Prostate gland (tissue), 2 donors: ENCODE measurements at regions of chr12 and their contacts with region 1.

Region 1: GRCh38 chr12:76348079-76348901 is at the start of gene BBS10:
- DNase-seq: peak; percentile 89
- H3K4me3 ChIP-seq: peak within 1 kb of the TSS; percentile 59 to 69
- H3K27ac ChIP-seq: peak within 1 kb of the TSS; percentile 80 to 83
- H3K4me1 ChIP-seq: peaks cover 5% of the 10 kb centered on the region
- H3K27me3 ChIP-seq: no peaks in the 10 kb centered on the region
- CTCF ChIP-seq: peak in 3 of 4 experiments; percentile 34 to 51 (median 38)
- POLR2A ChIP-seq: no peak
- total RNA-seq, gene BBS10: 11.6 to 11.9 TPM

Region 2: DNA sequence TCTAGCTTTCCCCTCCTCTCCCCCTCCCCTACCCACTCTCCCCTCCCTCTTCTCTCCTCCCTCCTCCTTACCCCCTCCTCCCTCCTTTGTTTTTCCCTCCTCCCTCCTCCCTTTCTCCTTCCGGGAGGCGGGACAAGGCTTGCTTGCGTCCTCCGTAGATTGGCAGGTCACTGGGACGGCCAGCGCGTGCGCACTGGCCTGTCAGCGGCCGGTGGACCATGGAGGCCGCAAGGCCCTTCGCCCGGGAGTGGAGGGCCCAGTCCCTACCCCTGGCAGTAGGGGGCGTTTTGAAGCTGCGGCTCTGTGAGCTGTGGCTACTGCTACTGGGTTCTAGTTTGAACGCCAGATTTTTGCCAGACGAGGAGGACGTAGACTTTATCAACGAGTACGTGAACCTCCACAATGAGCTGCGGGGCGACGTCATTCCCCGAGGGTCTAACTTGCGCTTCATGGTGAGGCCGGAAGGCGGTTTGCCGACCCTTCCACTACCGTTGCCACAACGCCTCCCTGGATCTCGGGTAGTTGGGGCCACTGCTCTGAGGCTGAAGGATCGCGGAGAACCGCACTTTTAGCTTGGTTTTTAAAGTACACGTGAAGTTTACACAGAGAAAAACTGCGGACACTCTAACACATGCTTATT is 957.3 kb before region 1 on chr12 and contains the start of gene GLIPR1L2:
- intact Hi-C with region 1: loop called (anchors 10 kb)
- DNase-seq: peak; percentile 94
- H3K4me3 ChIP-seq: peak within 1 kb of the TSS; percentile 46 to 52
- H3K27ac ChIP-seq: peak within 1 kb of the TSS; percentile 86 to 91
- H3K4me1 ChIP-seq: no peaks in the 10 kb centered on the region
- H3K27me3 ChIP-seq: no peaks in the 10 kb centered on the region
- CTCF ChIP-seq: peak; percentile 21 to 91 (median 82)
- POLR2A ChIP-seq: peak; percentile 64
- total RNA-seq, gene GLIPR1L2: 1.4 to 1.8 TPM

Region 3: DNA sequence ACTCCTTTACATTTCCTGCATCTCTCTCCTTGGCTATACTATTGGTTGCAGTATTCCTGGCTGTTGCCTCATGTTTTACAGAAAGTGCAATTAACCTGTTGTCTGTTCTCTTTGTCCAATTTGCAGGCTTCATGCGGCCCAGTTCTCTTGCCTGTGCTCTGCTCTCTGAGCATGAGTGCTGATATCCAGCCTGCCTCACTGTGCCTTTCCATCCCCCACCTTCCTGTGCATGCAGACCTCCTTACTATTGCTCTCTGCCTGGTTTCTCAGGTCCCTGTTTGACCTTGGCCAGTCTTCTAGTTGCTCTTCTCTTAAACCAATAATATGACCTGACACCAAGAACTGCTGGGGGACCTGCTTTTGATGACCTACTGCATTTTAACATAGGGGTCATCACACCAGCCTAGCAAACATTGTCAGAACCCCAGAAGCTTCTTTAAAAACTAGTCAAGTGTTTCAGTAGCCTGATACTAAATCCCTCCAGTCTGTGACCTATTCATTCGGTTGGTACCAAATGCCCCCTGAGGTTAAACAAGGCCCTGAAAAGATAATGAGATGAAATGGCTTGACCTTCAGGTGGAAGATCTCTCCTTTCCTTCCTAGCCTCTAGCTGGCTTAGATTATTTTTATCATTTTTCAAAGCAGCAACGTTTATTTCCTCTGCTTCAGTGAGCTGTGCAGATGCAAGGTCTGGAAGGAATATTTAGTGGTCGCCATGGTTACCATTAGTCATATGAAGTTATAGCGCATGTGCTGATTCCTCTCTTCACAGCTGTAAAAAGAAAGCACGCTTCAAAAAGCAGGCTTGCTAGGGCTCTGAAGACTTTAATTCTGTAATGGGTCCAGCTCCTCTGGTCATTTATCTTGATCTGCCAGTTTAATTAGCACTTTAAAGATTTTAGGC is 533.2 kb before region 1 on chr12:
- intact Hi-C with region 1: loop called (anchors 10 kb)
- DNase-seq: no peak
- H3K4me3 ChIP-seq: no peak overlapping the region
- H3K27ac ChIP-seq: no peak overlapping the region
- H3K4me1 ChIP-seq: no peaks in the 10 kb centered on the region
- H3K27me3 ChIP-seq: no peaks in the 10 kb centered on the region
- CTCF ChIP-seq: no peak
- POLR2A ChIP-seq: no peak

Region 4: GRCh38 chr12:75996861-75997447 is 351.3 kb before region 1 on chr12:
- intact Hi-C with region 1: no loop called
- DNase-seq: no peak
- H3K4me3 ChIP-seq: no peak overlapping the region
- H3K27ac ChIP-seq: no peak overlapping the region
- H3K4me1 ChIP-seq: no peaks in the 10 kb centered on the region
- H3K27me3 ChIP-seq: no peaks in the 10 kb centered on the region
- CTCF ChIP-seq: no peak
- POLR2A ChIP-seq: no peak

Region 5: GRCh38 chr12:76083904-76084862 is 264.1 kb before region 1 on chr12 and contains the start of gene NAP1L1:
- intact Hi-C with region 1: loop called (anchors 2 kb)
- DNase-seq: peak; percentile 97
- H3K4me3 ChIP-seq: peak within 1 kb of the TSS; percentile 76 to 94
- H3K27ac ChIP-seq: peak within 1 kb of the TSS; percentile 96 to 99
- H3K4me1 ChIP-seq: no peaks in the 10 kb centered on the region
- H3K27me3 ChIP-seq: no peaks in the 10 kb centered on the region
- CTCF ChIP-seq: peak in 1 of 4 experiments; percentile 11
- POLR2A ChIP-seq: peak; percentile 93
- total RNA-seq, gene NAP1L1: 223 to 325 TPM

Region 6: DNA sequence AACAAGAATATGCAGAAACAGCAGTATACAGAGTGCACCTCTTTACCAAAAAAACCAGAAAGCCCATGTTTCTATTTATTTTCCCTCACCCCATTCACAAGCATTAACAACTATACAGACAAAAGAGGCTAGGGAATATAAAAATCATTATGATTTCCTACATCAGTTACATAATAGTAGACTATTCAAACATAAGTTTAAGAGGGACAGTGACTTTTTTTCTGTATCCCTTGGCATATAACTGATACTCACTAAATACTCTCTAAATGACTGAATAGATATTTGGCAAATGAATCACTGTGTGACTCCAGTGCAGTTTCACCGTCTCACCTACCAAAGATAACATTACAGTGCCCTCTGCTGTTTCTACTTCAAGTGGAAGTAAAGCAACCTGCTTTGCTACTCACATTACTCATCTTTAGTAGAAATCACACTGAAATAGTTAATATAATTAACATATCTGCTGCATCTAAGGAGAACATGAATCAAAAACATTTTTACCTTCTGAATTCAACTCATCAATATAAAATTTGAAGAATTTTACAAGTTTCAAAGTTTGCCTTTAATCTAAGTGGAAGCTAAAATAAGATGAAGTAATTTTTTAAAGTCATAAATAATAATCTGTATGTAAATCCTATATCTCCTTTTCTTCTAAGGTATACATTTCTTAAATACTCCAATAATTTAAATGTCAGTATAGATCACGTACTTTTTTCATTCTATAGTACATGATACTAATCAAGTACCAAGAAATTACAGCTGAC is 107.5 kb after region 1 on chr12:
- intact Hi-C with region 1: loop called (anchors 10 kb)
- DNase-seq: peak; percentile 14
- H3K4me3 ChIP-seq: no peak overlapping the region
- H3K27ac ChIP-seq: no peak overlapping the region
- H3K4me1 ChIP-seq: no peaks in the 10 kb centered on the region
- H3K27me3 ChIP-seq: no peaks in the 10 kb centered on the region
- CTCF ChIP-seq: peak in 3 of 4 experiments; percentile 53 to 66 (median 62)
- POLR2A ChIP-seq: no peak